ENCODE measurements at regions of chr16 and their contacts with region 1.

Region 1: DNA sequence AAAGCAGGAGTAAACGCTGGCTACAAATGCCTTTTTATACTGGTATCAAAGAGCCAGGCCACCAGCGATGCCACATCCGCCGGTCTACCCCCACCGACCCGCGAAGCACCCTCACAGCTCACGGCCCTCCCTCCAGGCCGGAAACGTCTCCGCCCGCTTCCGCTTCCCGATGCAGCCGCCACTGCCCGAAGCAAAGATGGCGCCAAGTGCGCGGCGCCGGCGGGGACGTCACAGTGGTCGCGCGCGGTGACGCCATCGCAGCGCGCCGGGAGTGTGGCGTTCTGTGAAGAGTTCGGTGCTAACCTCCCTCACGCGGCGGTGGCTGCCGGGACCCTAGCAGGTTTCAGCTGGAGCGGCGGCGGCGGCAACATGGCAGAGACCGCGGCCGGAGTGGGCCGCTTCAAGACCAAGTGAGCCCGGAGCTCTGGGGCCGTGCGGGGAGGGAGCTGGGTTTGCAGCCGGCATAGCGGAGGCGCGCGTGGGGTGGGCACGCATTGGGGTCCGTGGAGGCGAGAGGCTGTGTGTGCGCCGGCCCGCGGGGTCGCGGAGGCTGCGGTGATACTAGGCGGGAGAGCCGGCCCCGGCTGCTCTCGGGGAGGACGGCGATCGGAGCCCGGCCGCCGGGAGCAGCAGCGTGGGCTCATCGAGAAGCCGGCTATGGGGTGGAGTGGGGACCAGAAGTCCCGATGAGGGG is at the start of gene TBL3:
- DNase-seq: peak; percentile 98
- ATAC-seq: peak; percentile 98
- H3K4me3 ChIP-seq: peak within 1 kb of the TSS; percentile 86 to 91 (median 87)
- H3K4me3 Mint-ChIP-seq: peak within 1 kb of the TSS; percentile 96
- H3K27ac ChIP-seq: peak within 1 kb of the TSS; percentile 82 to 85
- H3K27ac Mint-ChIP-seq: peak within 1 kb of the TSS; percentile 98
- H3K4me1 ChIP-seq: peaks cover 9 to 19% of the 10 kb centered on the region in 2 donors
- H3K4me1 Mint-ChIP-seq: peaks cover 21% of the 10 kb centered on the region
- H3K27me3 ChIP-seq: peaks cover 0 to 12% (median 1%) of the 10 kb centered on the region in 4 experiments
- H3K27me3 Mint-ChIP-seq: no peaks in the 10 kb centered on the region
- CTCF ChIP-seq: no peak
- total RNA-seq, gene TBL3: 31.9 and 32.2 TPM in 2 replicates

Region 2: DNA sequence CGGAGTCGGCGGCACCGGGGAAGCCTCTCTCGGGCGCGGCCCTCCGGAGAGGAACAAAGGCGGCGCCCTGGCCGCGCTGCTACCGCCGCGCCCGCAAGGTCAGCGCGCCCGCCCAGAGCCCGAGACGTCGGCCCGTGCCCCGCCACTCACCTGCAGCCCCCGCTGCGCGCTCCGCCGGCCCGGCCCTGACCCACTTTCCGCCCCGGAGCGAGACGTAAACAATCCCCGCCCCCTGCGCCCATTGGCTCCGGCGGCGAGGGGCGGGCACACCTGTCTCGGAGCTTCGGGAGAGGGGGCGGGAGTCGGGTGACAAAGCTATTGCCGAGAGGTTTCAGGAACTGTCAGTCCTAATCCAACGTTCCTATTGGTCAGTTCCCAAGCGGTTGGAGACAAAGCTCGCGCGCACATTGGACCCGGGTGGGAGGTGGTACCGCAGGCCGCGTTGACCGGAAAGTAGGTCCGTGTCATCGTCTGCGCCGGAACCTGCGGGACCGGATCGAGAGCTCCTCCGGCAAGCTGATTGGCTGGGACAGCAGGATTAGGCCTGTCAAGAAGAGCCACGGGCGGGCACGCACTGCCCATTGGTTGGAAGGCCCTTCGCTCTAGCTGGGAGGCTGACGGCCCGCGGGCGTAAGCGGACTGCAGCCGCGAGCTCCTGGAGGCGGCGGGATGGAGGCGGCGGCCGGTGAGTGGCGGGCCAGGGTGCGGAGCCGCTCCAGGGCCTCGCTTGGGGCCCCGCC is 189.4 kb before region 1 on chr16 and contains the starts of genes NUBP2 and SPSB3:
- CTCF ChIA-PET with region 1: no interaction called
- POLR2A ChIA-PET with region 1: no interaction called
- intact Hi-C with region 1: no loop called
- DNase-seq: peak; percentile 99
- ATAC-seq: peak; percentile 85
- H3K4me3 ChIP-seq: peak within 1 kb of the TSS; percentile 75 to 96 (median 83)
- H3K4me3 Mint-ChIP-seq: peak within 1 kb of the TSS; percentile 89
- H3K27ac ChIP-seq: peak within 1 kb of the TSS; percentile 47 to 76
- H3K27ac Mint-ChIP-seq: peak within 1 kb of the TSS; percentile 91
- H3K4me1 ChIP-seq: peaks cover 10 to 31% of the 10 kb centered on the region in 2 donors
- H3K4me1 Mint-ChIP-seq: peaks cover 22% of the 10 kb centered on the region
- H3K27me3 ChIP-seq: no peaks in the 10 kb centered on the region
- H3K27me3 Mint-ChIP-seq: no peaks in the 10 kb centered on the region
- CTCF ChIP-seq: no peak
- total RNA-seq, gene NUBP2: 50.2 and 52.6 TPM in 2 replicates
- total RNA-seq, gene SPSB3: 91.2 and 95.5 TPM in 2 replicates

Region 3: DNA sequence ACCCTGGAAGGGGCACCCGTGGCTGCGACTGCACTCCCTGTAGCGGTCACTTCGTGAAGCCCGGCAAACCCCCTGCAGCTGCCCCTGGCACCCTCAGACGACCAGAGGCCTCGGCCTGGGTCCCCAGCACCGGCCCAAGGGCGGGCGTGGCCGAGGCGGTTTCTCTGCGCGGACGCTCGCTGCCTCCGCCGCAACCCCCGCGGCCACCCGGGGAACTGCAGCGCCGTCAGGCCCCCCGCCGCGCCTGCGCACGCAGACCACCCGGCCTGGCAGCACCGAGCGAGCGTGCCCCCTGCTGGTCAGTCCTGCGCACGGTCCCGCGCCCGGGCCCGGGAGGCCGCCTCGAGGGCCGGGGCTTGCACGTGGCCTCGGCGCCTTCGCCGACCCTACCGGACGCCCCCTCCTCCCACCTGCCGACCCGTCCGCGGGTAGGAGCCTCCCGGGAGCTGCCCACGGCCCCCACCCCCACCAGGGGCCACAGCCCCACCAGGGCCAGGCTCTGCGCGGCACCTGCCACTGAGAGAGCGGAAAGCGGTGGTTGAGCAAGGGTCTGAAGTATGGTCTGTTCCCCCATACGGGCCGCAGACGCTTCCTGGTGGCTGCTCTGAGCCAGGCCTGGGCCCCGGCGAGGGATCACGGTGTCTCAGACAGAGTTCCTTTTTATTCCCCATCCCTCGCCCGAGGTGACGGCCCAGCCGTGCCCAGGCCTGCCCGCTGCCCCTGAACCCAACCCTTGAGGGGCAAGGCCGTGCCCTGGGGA is 42.2 kb before region 1 on chr16:
- CTCF ChIA-PET with region 1: no interaction called
- POLR2A ChIA-PET with region 1: no interaction called
- intact Hi-C with region 1: no loop called
- DNase-seq: peak; percentile 93
- ATAC-seq: peak; percentile 99
- H3K4me3 ChIP-seq: peak overlapping the region in 4 of 5 experiments; percentile 43 to 65 (median 58)
- H3K4me3 Mint-ChIP-seq: peak overlapping the region; percentile 71
- H3K27ac ChIP-seq: peak overlapping the region in 1 of 2 donors; percentile 27
- H3K27ac Mint-ChIP-seq: peak overlapping the region; percentile 70
- H3K4me1 ChIP-seq: peaks cover 4 to 10% of the 10 kb centered on the region in 2 donors
- H3K4me1 Mint-ChIP-seq: peaks cover 4% of the 10 kb centered on the region
- H3K27me3 ChIP-seq: peaks cover 0 to 8% (median 2%) of the 10 kb centered on the region in 4 experiments
- H3K27me3 Mint-ChIP-seq: peaks cover under 1% of the 10 kb centered on the region
- CTCF ChIP-seq: peak; percentile 95

Region 4: DNA sequence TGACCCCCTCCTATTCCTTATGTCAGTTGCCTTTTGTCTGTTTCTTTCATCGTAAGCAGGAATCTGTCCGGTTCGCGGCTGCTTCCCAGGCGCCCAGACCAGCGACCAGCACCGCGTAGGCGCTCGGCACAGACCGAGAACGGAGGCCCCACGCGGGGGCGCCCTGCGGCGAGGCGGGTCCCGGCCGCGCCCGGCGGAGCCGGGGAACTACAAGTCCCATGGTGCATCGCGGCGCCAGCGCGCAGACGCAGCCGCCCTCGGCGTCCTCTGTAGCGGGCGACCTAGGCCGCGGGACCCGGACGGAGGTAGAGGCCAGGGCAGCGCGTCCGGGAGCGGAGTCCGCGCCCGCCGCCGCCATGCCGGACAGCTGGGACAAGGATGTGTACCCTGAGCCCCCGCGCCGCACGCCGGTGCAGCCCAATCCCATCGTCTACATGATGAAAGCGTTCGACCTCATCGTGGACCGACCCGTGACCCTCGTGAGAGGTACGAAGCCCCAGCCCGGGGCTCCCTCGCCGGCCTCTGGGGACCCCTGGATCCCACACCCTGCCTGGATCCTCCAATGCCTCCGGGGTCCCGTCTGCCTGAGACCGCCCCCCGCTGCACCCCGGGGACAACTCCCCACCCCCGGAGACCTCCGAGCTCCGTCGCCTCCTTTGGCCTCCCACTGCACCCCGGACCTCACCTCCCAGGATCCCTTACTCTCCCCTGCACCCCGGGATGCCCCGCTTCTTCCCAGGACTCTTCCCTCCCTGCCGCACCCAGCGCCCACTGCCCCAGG is 12.5 kb before region 1 on chr16 and contains the start of gene NDUFB10:
- CTCF ChIA-PET with region 1: no interaction called
- POLR2A ChIA-PET with region 1: interaction called, 8 read pairs
- intact Hi-C with region 1: loop called (anchors 1 kb)
- DNase-seq: peak; percentile 93
- ATAC-seq: peak; percentile 94
- H3K4me3 ChIP-seq: peak within 1 kb of the TSS; percentile 51 to 89 (median 86)
- H3K4me3 Mint-ChIP-seq: peak within 1 kb of the TSS; percentile 89
- H3K27ac ChIP-seq: peak within 1 kb of the TSS; percentile 51 to 77
- H3K27ac Mint-ChIP-seq: peak within 1 kb of the TSS; percentile 89
- H3K4me1 ChIP-seq: peaks cover 24 to 47% of the 10 kb centered on the region in 2 donors
- H3K4me1 Mint-ChIP-seq: peaks cover 38% of the 10 kb centered on the region
- H3K27me3 ChIP-seq: no peaks in the 10 kb centered on the region
- H3K27me3 Mint-ChIP-seq: peaks cover 3% of the 10 kb centered on the region
- CTCF ChIP-seq: peak; percentile 80
- total RNA-seq, gene NDUFB10: 63.7 and 70.4 TPM in 2 replicates

Region 5: GRCh38 chr16:1983544-1984346 is 11.8 kb after region 1 on chr16 and contains the start of gene GFER:
- CTCF ChIA-PET with region 1: interaction called, 4 read pairs
- POLR2A ChIA-PET with region 1: interaction called, 5 read pairs
- intact Hi-C with region 1: loop called (anchors 1 kb)
- DNase-seq: peak; percentile 88
- ATAC-seq: peak; percentile 94
- H3K4me3 ChIP-seq: peak within 1 kb of the TSS; percentile 3 to 78 (median 62)
- H3K4me3 Mint-ChIP-seq: peak within 1 kb of the TSS; percentile 88
- H3K27ac ChIP-seq: peak within 1 kb of the TSS; percentile 10 to 66
- H3K27ac Mint-ChIP-seq: peak within 1 kb of the TSS; percentile 83
- H3K4me1 ChIP-seq: peaks cover 16 to 35% of the 10 kb centered on the region in 2 donors
- H3K4me1 Mint-ChIP-seq: peaks cover 25% of the 10 kb centered on the region
- H3K27me3 ChIP-seq: peaks cover 0 to 39% (median 19%) of the 10 kb centered on the region in 4 experiments
- H3K27me3 Mint-ChIP-seq: peaks cover 6% of the 10 kb centered on the region
- CTCF ChIP-seq: peak; percentile 38
- total RNA-seq, gene GFER: 28.2 and 30.4 TPM in 2 replicates

Region 6: DNA sequence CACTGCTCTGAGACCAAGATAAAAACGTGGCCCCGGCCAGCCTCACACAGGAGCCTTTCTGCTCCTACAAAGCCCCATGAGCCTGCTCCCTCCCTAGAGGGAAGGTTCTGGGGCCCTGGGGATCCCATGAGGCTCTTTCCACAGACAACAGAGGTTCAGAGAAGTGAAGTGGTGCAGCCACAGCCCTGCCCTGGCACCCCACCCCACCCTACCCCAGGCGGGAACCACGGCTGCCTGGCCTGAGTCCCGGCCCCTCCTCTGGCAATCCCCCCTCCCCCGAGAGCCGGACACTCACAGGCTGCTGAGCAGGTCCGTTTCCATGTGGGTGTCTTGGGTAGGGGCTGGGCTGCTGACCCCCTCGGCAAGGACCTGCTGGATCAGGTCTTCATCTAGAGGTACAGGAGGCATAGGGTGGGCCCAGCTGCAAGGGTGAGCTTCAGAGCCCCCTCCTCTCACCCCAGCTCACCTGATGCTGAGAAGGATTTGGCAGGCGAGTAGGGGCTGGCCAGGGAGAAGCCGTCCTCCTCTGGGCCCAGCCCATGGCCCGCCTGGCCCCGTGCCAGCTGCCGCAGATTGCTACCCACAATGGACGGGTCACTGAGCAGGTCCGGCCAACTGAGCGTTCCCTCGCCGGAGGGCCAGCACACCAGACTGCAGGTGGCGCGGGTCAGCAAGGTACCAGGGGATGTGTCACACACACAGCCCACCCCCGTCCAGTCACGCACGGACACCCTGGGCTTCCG is 125.1 kb after region 1 on chr16:
- CTCF ChIA-PET with region 1: no interaction called
- POLR2A ChIA-PET with region 1: no interaction called
- intact Hi-C with region 1: no loop called
- DNase-seq: no peak
- ATAC-seq: no peak
- H3K4me3 ChIP-seq: no peak overlapping the region
- H3K4me3 Mint-ChIP-seq: no peak overlapping the region
- H3K27ac ChIP-seq: no peak overlapping the region
- H3K27ac Mint-ChIP-seq: no peak overlapping the region
- H3K4me1 ChIP-seq: no peaks in the 10 kb centered on the region
- H3K4me1 Mint-ChIP-seq: no peaks in the 10 kb centered on the region
- H3K27me3 ChIP-seq: no peaks in the 10 kb centered on the region
- H3K27me3 Mint-ChIP-seq: no peaks in the 10 kb centered on the region
- CTCF ChIP-seq: no peak

Measured in B cell (primary cell).